Right ventricle myocardium superior (tissue), 1 donor: ENCODE measurements at regions of chr4 and their contacts with region 1.

Region 1: GRCh38 chr4:150209140-150209829 is 131.0 kb downstream of the DCLK2 start:
- DNase-seq: peak; percentile 76
- ATAC-seq: peak; percentile 78

Region 2: GRCh38 chr4:150010525-150011126 is 198.7 kb before region 1 on chr4:
- intact Hi-C with region 1: loop called (anchors 5 kb)
- DNase-seq: no peak
- ATAC-seq: peak; percentile 92

Region 3: DNA sequence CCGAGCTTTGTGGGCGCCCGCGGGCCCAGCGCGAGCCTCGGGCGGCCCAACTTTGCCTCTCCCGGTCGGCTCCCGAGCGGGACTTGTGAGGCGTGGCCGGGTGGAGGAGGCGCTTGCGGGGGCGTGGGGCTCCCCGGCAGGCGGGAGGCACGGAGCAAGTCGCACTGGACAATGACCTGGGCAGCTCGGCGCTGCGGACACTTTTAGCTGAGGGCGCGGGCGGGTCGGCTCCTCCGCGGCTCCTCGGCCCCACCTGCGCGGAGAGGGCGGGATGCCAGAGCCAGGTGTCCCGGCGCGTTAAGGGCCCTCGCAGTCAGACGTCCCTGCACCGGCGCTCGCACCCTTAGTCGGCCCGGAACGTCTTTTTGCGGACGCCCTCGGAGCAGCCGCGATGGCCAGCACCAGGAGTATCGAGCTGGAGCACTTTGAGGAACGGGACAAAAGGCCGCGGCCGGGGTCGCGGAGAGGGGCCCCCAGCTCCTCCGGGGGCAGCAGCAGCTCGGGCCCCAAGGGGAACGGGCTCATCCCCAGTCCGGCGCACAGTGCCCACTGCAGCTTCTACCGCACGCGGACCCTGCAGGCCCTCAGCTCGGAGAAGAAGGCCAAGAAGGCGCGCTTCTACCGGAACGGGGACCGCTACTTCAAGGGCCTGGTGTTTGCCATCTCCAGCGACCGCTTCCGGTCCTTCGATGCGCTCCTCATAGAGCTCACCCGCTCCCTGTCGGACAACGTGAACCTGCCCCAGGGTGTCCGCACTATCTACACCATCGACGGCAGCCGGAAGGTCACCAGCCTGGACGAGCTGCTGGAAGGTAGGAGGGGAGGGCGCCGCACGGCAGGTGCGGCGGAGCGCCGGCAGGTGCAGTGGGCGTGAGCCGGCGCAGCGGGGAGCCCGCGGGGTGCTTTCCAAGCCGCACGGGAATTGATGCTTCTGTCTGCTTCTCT is 130.4 kb before region 1 on chr4:
- intact Hi-C with region 1: loop called (anchors 5 kb)
- DNase-seq: peak; percentile 77
- ATAC-seq: peak; percentile 62